Calu3 (cell line): ENCODE measurements at regions of chr14 and their contacts with region 1.

Region 1: DNA sequence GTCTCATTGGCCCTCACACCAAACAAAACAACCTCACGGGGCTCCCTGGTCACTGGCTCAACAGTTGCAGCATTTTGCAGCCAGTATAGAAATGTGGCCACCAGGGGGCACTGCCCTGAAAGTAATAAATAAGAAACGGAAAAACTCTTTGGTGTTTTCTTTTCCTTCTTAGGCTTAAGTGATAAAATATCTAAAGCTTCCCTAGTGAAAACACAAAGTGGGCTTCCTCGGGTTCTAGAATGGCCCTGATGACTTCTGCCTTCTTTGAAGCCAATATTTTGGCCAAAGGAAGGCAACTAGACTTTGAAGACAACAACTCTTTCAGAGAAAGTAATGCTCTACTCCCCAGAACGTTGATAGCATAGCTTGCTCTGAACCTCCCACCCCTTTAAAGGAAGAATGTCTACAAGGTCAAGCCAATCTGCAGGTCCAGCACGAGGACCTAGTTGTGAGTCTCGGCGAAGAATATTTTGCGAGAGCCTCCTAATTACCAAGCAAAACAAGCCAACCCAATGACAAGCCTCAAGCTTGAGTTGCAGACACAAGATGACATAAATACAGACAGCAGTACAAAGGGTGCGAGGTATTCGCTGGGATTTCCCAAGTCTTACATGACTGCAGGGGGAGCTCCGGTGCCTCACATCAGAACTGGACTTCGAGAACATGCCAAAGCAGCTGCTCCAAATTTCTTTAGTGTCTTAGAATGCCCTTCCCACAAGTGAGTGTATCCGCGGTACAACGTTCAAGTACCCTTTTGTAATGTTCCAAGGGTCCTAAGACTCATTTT is 2.6 kb downstream of the ITPK1 start:
- DNase-seq: peak; percentile 82
- H3K4me3 Mint-ChIP-seq: peak overlapping the region; percentile 86
- H3K27ac Mint-ChIP-seq: peak overlapping the region; percentile 67
- H3K4me1 Mint-ChIP-seq: peaks cover 9% of the 10 kb centered on the region
- H3K27me3 Mint-ChIP-seq: no peaks in the 10 kb centered on the region
- CTCF ChIP-seq: peak; percentile 73

Region 2: GRCh38 chr14:92880869-92881289 is 232.2 kb before region 1 on chr14:
- CTCF ChIA-PET with region 1: interaction called, 11 read pairs
- intact Hi-C with region 1: no loop called
- DNase-seq: peak; percentile 64
- H3K4me3 Mint-ChIP-seq: no peak overlapping the region
- H3K27ac Mint-ChIP-seq: no peak overlapping the region
- H3K4me1 Mint-ChIP-seq: no peaks in the 10 kb centered on the region
- H3K27me3 Mint-ChIP-seq: peaks cover 66% of the 10 kb centered on the region
- CTCF ChIP-seq: peak; percentile 41

Region 3: DNA sequence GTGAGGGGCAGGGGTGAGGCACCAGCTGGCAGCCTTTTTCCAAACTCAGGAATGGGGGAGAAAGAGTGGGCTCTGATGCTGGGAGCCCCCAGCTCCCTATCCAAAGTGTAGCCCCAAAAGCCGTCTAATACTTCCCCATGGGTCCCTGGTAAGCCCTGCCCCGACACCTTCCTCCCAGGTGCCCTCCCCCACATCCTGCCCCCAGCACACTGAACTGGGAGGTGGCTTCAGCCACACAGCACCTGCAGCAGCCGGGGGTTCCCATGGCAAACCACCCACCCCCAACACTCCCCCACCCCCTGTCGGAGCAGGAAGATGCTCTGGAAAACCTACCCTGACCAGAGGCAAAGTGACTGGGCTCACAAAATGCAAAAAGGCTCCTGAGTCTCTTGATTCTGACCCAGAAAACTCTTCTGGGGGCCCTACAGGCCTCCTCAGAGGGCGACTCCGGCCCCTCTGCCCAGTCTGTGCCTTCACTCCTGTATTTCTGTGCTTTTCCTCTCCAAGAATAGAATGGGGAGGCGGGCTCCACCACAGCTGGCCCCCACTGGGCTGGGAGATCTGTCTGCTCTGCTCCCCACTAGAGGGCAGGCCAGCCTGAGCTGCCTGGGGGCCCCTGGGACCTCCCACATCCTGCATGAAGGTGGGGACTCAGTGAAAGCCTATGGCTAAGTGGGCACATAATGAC is 79.0 kb before region 1 on chr14:
- CTCF ChIA-PET with region 1: interaction called, 14 read pairs
- intact Hi-C with region 1: no loop called
- DNase-seq: peak; percentile 44
- H3K4me3 Mint-ChIP-seq: no peak overlapping the region
- H3K27ac Mint-ChIP-seq: peak overlapping the region; percentile 17
- H3K4me1 Mint-ChIP-seq: peaks cover 63% of the 10 kb centered on the region
- H3K27me3 Mint-ChIP-seq: no peaks in the 10 kb centered on the region
- CTCF ChIP-seq: no peak

Region 4: GRCh38 chr14:93132470-93133065 is 19.5 kb after region 1 on chr14:
- CTCF ChIA-PET with region 1: interaction called, 23 read pairs
- intact Hi-C with region 1: no loop called
- DNase-seq: peak; percentile 41
- H3K4me3 Mint-ChIP-seq: no peak overlapping the region
- H3K27ac Mint-ChIP-seq: no peak overlapping the region
- H3K4me1 Mint-ChIP-seq: peaks cover 15% of the 10 kb centered on the region
- H3K27me3 Mint-ChIP-seq: no peaks in the 10 kb centered on the region
- CTCF ChIP-seq: peak; percentile 31

Region 5: DNA sequence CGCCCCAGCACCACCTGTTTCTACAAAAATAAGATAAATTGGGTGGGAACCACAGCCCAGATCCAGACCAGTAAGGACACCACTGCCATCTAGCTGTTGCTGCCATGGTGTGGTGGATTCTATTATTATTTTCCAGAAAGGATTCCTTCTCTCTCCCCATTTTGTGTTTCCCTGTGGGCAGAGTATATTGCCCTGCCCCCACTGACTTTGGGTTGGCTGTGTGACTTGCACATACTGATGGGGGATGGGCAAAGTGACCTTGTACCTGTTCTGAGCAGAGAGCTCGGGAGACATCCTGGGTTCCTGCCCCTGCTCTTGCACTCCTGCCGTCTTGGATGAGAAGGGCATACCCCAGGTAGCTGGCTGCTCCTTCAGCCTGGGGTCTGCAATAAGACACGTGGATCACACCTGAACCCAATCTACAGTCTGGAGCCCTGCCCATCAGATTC is 47.3 kb after region 1 on chr14:
- CTCF ChIA-PET with region 1: interaction called, 8 read pairs
- intact Hi-C with region 1: loop called (anchors 5 kb)
- DNase-seq: peak; percentile 31
- H3K4me3 Mint-ChIP-seq: no peak overlapping the region
- H3K27ac Mint-ChIP-seq: no peak overlapping the region
- H3K4me1 Mint-ChIP-seq: no peaks in the 10 kb centered on the region
- H3K27me3 Mint-ChIP-seq: no peaks in the 10 kb centered on the region
- CTCF ChIP-seq: no peak

Region 6: DNA sequence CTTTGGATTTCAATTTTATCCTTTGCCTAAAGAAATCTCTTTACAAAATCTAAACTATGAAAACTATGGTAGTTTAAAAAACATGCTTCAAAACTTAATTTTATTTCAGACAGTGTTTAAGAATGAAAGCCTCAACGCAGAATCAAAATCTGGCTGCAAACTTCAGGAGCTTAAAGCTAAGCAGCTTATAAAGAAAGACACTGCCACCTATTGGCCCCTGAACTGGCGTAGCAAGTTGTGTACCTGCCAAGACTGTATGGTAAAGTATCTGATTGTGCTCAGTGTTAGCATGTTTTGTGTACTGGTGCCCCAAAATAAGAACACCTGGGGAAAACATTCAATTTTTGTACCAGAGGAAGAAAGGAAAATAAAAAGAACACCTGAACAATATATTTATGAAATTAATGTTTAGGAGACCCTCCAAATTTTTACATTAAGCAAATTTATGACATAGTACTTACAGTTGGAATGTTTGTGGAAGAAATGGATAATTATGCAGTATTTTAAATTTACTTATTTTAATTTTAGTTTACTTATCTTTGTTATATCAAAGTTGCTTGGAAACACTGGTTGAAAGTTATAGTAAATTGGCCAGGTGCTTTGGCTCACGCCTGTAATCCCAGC is 106.1 kb after region 1 on chr14:
- CTCF ChIA-PET with region 1: interaction called, 10 read pairs
- intact Hi-C with region 1: no loop called
- DNase-seq: peak; percentile 50
- H3K4me3 Mint-ChIP-seq: no peak overlapping the region
- H3K27ac Mint-ChIP-seq: no peak overlapping the region
- H3K4me1 Mint-ChIP-seq: no peaks in the 10 kb centered on the region
- H3K27me3 Mint-ChIP-seq: no peaks in the 10 kb centered on the region
- CTCF ChIP-seq: peak; percentile 32